Sciatic nerve (tissue), 2 donors: ENCODE measurements at regions of chr2 and their contacts with region 1.

Region 1: DNA sequence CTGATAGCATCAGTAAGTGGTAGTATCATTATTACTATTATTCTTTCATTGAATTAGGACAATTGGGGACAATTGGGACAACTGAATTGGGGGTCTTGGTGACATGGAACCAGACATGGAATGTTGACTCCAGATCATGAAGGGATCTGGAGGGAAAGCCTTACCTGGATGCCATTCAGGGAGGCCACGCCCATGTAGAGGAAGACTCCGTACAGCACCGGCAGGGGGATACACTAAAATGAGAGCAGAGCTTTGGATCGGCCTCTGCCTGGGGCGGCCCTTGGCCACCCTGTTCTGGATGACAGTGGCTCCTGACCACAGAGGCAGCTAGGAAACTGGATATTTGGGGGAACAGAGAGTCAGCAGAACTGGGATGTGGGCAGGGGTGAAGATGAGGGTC is 29.2 kb downstream of the MTHFD2 start:
- DNase-seq: no peak
- ATAC-seq: no peak

Region 2: DNA sequence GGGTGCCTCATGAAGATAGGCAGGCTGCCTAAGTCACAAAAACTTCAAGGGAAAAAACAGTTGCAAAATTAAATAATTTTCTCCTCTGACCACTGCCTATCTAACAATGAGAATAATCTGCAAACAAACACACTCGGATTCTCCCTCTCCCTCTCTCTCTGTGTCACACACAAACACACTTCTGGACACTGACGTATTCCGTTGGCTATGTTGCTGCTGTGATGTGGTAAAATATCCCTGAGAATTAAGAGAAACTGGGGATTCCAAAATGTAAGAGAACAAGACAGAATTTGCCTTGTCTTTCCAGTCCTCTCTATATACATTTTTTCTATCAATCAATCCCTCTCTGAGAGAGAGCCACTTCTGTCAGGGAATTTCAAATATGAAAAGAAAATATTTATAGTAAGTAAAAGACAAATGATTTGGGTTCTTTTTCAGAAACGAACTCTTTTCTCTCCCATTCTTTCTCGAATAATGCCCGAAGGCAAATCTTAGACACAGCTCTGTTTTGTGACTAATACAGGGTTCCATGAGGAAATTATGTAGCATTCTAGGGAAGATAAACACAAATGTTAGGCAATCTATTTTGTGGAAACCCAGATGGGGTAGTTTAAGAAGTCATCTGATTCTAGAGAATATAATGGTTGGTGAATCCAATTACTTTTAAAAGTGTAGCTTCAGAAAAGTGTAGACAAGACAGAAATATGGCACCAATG is 1769.7 kb before region 1 on chr2:
- intact Hi-C with region 1: no loop called
- DNase-seq: no peak
- ATAC-seq: no peak

Region 3: DNA sequence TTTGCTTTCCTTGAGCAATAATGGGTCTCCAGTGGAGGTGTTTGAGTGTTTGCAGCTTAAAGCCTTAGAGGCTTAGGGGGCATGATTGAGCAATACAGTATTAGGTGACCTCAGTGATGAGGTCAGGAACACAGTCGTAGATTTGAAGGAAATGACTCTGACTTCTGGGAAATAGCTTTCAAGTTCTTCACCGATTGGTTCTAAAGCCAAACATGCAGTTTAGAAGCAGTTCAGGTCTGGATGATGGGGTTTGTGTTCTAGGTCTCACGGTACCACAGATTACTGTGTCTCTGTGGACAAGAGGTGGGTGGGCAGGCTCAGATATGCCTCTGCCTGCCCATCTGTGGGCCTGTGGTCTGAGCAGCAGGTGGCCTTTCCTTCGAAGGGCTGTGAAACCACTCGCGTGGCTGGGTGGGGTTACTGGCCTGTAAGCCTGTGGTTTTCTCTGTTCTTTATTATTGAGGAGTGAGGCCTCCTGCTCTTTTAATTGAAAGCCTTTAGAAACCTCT is 21.4 kb before region 1 on chr2:
- intact Hi-C with region 1: no loop called
- DNase-seq: no peak
- ATAC-seq: peak; percentile 75

Region 4: DNA sequence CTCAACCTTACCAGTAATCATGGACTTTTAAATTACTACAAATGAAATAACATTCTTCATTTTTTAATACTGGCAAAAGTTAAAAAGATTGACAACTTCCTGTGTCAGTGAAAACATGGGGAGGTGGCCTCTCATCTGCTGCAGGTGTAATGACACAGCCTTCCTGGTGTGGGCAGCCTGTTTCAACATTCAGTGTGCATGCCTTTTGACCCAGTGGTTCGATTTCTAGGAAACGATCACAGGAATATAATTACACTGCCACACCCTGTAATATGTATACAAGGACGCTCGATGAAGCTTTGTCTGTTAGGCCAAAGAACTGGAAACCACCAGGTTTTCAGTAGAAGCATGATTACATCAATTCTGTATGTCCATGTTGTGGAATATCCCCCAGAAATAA is 39.4 kb after region 1 on chr2:
- intact Hi-C with region 1: loop called (anchors 2 kb)
- DNase-seq: no peak
- ATAC-seq: no peak